Dorsolateral prefrontal cortex (tissue), 120 donors: ENCODE measurements at regions of chr13 and their contacts with region 1.

Region 1: DNA sequence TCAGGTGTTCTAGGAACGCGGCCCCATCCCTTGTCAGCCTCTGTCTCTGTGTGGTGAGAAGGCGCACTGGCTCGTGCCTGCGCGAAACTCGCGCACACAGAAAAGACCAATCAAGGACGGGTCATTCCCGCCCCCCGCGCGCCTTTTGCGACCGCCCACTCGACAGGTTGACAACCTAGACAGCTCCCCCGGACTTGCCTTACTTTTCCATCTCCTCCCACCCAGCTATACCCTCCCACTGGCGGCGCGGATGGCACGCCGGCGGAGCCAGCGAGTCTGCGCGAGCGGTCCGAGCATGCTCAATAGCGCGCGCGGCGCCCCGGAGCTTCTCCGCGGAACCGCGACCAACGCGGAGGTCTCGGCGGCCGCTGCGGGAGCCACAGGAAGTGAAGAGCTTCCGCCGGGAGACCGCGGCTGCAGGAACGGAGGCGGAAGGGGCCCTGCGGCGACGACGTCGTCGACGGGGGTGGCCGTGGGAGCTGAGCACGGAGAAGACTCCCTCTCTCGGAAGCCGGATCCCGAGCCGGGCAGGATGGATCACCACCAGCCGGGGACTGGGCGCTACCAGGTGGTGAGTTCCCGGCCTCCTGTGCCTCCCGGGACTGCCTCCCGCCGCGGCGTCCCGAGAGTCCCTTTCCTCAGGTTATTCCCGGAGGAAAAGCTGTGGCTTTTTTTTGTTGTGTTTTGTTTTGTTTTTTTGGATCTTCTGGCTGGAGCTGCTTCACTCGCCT is at the start of gene NDFIP2:
- DNase-seq: peak; percentile 68 to 93 (median 78)
- H3K4me3 ChIP-seq: peak within 1 kb of the TSS; percentile 54 to 97 (median 88)
- H3K27ac ChIP-seq: peak within 1 kb of the TSS in 58 of 59 donors; percentile 13 to 93 (median 78)
- H3K27me3 ChIP-seq: no peaks in the 10 kb centered on the region
- CTCF ChIP-seq: peak in 34 of 56 donors; percentile 5 to 62 (median 32)
- total RNA-seq, gene NDFIP2: 61.3 to 160 (median 114) TPM

Region 2: DNA sequence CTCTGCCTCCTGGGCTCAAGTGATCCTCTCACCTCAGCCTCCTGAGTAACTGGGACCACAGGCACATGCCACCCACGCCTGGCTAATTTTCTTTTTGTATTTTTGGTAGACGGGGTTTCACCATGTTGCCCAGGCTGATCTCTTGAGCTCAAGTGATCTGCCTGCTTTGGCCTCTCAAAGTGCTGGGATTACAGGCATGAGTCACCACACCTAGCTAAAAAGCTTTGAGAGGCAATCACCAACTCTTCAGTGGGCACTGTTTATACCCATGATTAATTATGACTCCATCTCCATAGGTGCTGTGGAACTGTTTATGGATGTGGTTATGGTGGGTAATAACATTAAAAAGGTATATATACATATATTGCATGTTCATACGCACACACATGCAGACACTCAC is 67.6 kb before region 1 on chr13:
- intact Hi-C with region 1: loop called in 1 of 2 experiments (anchors 10 kb)
- DNase-seq: no peak
- H3K4me3 ChIP-seq: no peak overlapping the region
- H3K27ac ChIP-seq: no peak overlapping the region
- H3K27me3 ChIP-seq: no peaks in the 10 kb centered on the region
- CTCF ChIP-seq: no peak

Region 3: GRCh38 chr13:79423801-79424642 is 57.1 kb before region 1 on chr13:
- intact Hi-C with region 1: loop called (anchors 5 to 10 kb)
- DNase-seq: no peak
- H3K4me3 ChIP-seq: no peak overlapping the region
- H3K27ac ChIP-seq: peak overlapping the region in 1 of 59 donors; percentile 6
- H3K27me3 ChIP-seq: no peaks in the 10 kb centered on the region
- CTCF ChIP-seq: peak; percentile 64 to 93 (median 81)

Region 4: DNA sequence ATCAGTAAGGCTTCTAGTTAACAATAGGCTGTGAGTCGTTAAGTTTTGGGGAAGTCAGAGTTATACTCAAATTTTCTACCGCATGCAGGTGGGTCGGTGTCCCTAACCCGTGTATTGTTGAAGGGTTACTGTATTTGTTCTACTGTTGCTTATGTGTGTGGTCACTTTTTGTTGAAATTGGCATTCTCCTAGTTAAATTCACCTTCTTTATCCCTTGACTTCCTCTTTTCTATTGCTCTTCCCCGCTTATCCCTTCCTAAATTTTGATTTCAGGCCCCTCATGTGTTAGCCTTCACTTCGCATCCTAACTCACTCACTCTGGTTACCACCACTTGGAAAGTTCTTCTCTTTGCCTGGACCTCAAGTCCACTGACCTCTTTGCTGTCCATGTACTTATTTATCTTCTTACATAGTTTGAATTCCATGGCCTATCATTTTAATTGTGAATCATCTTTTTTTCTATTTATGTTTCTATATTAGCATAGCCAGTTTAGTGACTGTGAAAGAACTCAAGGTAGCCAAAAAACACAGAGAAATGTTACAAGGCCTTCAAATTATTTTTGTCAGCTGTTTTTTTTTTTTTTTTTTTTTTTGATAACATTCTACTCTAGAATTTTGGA is 52.8 kb after region 1 on chr13:
- intact Hi-C with region 1: loop called (anchors 2 to 5 kb)
- DNase-seq: no peak
- H3K4me3 ChIP-seq: no peak overlapping the region
- H3K27ac ChIP-seq: peak overlapping the region in 30 of 59 donors; percentile 8 to 89 (median 48)
- H3K27me3 ChIP-seq: no peaks in the 10 kb centered on the region
- CTCF ChIP-seq: no peak

Region 5: GRCh38 chr13:79901336-79901735 is 420.2 kb after region 1 on chr13:
- intact Hi-C with region 1: no loop called
- DNase-seq: peak in 6 of 10 donors; percentile 10 to 54 (median 40)
- H3K4me3 ChIP-seq: peak overlapping the region in 8 of 59 donors; percentile 8 to 32 (median 19)
- H3K27ac ChIP-seq: peak overlapping the region in 6 of 59 donors; percentile 15 to 42 (median 26)
- H3K27me3 ChIP-seq: no peaks in the 10 kb centered on the region
- CTCF ChIP-seq: peak in 51 of 56 donors; percentile 24 to 70 (median 42)

Region 6: DNA sequence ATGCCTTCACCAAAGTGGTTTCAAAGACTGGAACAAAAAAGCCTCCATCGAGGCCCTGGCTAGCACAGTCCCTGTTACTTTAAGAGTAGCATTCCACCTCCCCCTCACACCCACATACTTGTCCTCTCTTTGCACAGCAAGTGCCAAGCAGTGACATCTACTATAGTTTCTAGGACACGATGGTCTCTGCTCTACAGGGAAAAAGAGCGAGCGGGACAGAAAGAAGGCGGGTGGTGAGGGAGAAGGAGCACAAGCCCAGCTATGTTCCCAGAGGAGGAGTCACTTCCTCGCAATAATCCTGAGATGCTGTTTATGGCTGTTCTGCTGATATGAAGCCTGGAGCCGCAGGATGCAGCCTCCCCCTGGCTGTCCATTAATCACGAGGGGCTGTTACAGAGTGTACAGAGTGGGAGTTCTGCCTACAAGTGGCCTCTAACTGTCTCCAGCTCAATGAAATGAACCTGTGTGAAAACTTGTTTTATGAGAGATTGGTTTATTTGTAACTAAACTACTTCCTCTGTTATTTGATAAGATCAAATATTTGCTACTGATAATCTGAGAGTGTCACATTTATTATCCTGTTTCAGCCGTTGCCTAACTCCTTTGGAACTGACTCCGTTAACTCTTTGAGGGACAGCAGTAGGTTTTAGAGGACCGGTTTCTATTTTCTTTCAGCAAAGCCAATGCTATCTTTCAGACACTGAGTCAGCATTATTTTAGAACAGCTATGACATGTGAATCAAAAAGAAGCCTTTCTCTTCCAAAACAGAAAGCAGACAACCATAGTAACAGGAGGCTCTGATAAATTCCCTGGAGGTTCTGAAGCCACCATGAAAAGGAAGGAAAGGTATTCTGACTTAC is 651.9 kb after region 1 on chr13:
- intact Hi-C with region 1: loop called in 1 of 2 experiments (anchors 10 kb)
- DNase-seq: peak; percentile 25 to 86 (median 68)
- H3K4me3 ChIP-seq: peak overlapping the region in 58 of 59 donors; percentile 9 to 65 (median 44)
- H3K27ac ChIP-seq: peak overlapping the region; percentile 73 to 98 (median 95)
- H3K27me3 ChIP-seq: no peaks in the 10 kb centered on the region
- CTCF ChIP-seq: peak in 9 of 56 donors; percentile 4 to 24 (median 22)